Mammary epithelial cell (primary cell): ENCODE measurements at regions of chr7 and their contacts with region 1.

Region 1: GRCh38 chr7:41029072-41029499 is 673.8 kb downstream of the INHBA start:
- DNase-seq: peak; percentile 100
- H3K4me3 ChIP-seq: no peak overlapping the region
- H3K27ac ChIP-seq: peak overlapping the region; percentile 87
- H3K4me1 ChIP-seq: peaks cover 45% of the 10 kb centered on the region
- H3K27me3 ChIP-seq: no peaks in the 10 kb centered on the region
- CTCF ChIP-seq: no peak

Region 2: DNA sequence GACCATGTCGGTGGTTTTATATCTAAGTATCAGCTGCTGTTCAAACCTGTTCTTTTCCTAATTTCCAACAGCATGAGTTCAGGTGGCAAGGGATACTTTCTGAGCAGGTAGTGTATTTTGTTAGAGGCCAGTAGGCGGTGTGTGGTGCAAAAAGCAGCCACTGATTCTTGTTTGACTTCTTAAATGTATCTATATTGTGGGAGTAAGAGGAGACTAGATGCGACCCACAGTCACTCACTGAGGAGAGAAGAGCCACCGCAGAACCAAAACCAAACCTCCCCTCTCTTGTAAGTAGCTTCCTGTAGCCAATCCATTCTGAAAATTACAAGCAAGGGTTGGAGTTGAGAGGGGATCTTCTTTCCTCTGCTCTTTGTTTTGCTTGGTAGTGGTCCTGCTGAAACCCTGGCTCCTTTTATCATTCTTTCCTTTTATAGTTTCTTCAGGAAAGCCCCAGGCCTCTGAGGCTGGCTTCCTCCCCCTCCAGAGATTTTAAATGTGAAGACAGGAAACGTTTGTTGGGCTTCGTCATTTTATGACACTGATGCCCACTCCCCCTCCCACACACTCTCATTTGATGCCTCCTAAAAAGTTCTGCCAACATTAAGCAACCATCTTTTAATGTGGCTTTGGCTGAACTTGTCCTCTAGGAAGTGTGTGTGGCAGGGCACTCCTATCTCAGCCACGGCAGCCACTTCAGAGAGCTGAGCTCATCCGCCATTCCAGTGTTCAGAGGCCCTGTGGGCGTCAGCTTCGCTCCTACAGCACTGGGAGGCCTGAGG is 328.3 kb before region 1 on chr7:
- CTCF ChIA-PET with region 1: no interaction called
- dilution Hi-C with region 1: no loop called
- in situ Hi-C with region 1: no loop called
- intact Hi-C with region 1: loop called (anchors 10 kb)
- DNase-seq: peak; percentile 54
- H3K4me3 ChIP-seq: no peak overlapping the region
- H3K27ac ChIP-seq: peak overlapping the region; percentile 18
- H3K4me1 ChIP-seq: peaks cover 38% of the 10 kb centered on the region
- H3K27me3 ChIP-seq: no peaks in the 10 kb centered on the region
- CTCF ChIP-seq: peak; percentile 15 to 28

Region 3: GRCh38 chr7:40833888-40834234 is 195.2 kb before region 1 on chr7:
- CTCF ChIA-PET with region 1: no interaction called
- dilution Hi-C with region 1: no loop called
- in situ Hi-C with region 1: no loop called
- intact Hi-C with region 1: loop called (anchors 2 kb)
- DNase-seq: no peak
- H3K4me3 ChIP-seq: no peak overlapping the region
- H3K27ac ChIP-seq: no peak overlapping the region
- H3K4me1 ChIP-seq: peaks cover 23% of the 10 kb centered on the region
- H3K27me3 ChIP-seq: no peaks in the 10 kb centered on the region
- CTCF ChIP-seq: peak; percentile 26 to 45

Region 4: GRCh38 chr7:40918701-40919271 is 110.3 kb before region 1 on chr7:
- CTCF ChIA-PET with region 1: interaction called, 5 read pairs
- dilution Hi-C with region 1: no loop called
- in situ Hi-C with region 1: no loop called
- intact Hi-C with region 1: loop called (anchors 1 kb)
- DNase-seq: peak; percentile 93
- H3K4me3 ChIP-seq: no peak overlapping the region
- H3K27ac ChIP-seq: peak overlapping the region; percentile 65
- H3K4me1 ChIP-seq: peaks cover 34% of the 10 kb centered on the region
- H3K27me3 ChIP-seq: no peaks in the 10 kb centered on the region
- CTCF ChIP-seq: no peak

Region 5: DNA sequence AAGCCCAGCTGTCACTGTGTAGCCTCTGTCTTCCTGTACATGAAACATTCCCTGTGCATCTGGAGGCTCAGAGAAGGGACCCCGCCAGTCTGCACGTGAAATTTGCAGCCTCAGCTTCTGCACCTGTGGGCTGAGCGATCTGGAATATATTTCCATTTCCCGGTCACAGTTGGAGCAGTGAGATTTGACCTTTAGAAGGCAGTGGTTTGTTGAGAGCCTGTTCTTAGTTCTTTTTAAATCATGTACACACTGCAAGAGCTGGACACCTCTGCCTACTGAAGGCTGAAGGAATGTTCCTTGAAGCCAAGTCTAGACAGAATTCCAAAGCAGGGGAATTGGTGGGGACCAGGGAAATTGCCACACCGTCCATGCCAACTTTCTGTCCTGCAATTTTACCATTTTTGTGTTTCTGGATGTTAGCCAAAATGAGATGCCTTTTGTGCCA is 32.8 kb before region 1 on chr7:
- CTCF ChIA-PET with region 1: no interaction called
- dilution Hi-C with region 1: no loop called
- in situ Hi-C with region 1: no loop called
- intact Hi-C with region 1: no loop called
- DNase-seq: no peak
- H3K4me3 ChIP-seq: no peak overlapping the region
- H3K27ac ChIP-seq: no peak overlapping the region
- H3K4me1 ChIP-seq: no peaks in the 10 kb centered on the region
- H3K27me3 ChIP-seq: no peaks in the 10 kb centered on the region
- CTCF ChIP-seq: no peak

Region 6: DNA sequence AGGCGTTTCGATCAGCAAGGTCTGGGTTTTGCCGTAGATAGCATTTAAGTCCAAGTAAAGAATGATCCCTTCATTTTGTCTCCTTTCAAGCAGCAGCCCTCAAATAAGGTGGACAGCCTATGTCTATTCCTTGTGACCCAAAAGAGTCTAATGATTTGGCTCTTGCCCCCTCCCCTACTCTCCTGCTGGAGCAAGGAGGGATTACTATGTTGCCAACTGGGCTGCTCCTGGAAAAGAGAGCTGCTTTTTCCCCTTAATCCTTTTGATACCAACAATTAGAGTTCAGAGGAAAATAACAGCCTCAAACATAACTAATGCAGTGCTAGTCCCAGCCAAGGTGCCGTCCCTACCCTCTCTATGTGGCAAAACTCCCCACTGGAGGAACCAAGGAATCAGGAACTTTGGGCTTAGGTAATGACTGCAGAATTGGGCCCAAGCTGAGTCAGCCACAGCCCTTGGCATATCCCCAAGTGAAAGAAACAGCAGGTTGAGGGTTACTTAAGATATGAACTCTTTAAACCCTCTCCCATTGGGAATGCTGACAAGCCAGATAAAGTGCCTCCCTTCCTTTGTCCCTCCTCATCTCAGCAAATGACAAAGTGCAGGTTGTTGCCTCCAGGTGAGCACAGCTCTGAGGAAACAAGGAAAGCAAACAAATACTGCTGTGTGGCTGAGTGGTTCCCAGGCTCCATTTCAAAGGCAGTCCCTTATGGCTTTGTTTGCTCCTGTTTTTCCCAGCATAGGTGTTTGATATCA is 30.1 kb after region 1 on chr7:
- CTCF ChIA-PET with region 1: no interaction called
- dilution Hi-C with region 1: no loop called
- in situ Hi-C with region 1: no loop called
- intact Hi-C with region 1: no loop called
- DNase-seq: peak; percentile 70
- H3K4me3 ChIP-seq: no peak overlapping the region
- H3K27ac ChIP-seq: no peak overlapping the region
- H3K4me1 ChIP-seq: peaks cover 13% of the 10 kb centered on the region
- H3K27me3 ChIP-seq: no peaks in the 10 kb centered on the region
- CTCF ChIP-seq: no peak

Region 7: GRCh38 chr7:41093141-41093540 is 64.1 kb after region 1 on chr7:
- CTCF ChIA-PET with region 1: no interaction called
- dilution Hi-C with region 1: no loop called
- in situ Hi-C with region 1: no loop called
- intact Hi-C with region 1: no loop called
- DNase-seq: no peak
- H3K4me3 ChIP-seq: no peak overlapping the region
- H3K27ac ChIP-seq: no peak overlapping the region
- H3K4me1 ChIP-seq: peaks cover 13% of the 10 kb centered on the region
- H3K27me3 ChIP-seq: no peaks in the 10 kb centered on the region
- CTCF ChIP-seq: no peak